Activated B cell treated with CpG ODN at 0.5 μM for 24 hours (primary cell): ENCODE measurements at regions of chr4 and their contacts with region 1.

Region 1: DNA sequence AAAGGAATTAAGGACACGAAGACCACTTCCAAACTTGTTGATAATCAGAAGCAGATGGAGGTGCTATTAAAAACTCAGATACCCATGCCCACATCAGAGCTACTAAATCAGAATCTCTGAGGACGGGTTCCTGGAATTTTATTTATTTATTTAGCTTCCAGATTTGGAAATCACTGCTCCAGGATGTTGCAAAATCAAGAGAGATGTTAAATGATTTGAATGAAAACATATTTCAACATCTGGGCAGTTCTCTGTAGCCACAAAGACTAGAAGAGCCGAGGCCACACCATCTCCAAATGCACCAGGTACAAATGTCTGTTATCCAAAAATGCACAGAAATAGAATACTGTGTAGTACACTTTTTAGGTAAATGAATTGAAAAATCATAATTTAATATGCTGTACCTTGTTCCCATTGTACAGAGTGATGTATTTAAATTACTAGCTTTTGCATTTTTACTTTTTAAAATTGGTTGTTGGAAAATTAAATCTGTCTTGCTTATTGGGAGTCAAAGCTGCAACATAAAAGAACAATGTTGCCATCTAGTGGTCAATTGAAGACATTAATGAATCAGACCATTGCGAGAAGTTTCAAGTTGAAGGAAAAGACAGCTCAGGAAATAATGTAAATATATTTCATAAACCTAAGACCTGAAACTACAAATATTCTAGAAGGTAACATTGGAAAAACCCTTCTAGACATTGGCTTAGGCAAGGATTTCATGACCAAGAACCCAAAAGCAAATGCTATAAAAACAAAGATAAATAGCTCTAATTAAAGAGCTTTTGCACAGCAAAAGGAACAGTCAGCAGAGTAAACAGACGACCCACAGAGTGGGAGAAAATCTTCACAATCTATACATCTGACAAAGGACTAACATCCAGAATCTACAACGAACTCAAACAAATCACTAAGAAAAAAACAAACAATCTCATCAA is 151.3 kb upstream of the TTC29 start:
- DNase-seq: no peak
- ATAC-seq: peak; percentile 37
- H3K4me3 Mint-ChIP-seq: no peak overlapping the region
- H3K27ac Mint-ChIP-seq: no peak overlapping the region
- H3K4me1 Mint-ChIP-seq: no peaks in the 10 kb centered on the region
- H3K27me3 Mint-ChIP-seq: peaks cover 18% of the 10 kb centered on the region
- CTCF ChIP-seq: peak; percentile 47

Region 2: GRCh38 chr4:145234091-145234706 is 1862.7 kb before region 1 on chr4:
- CTCF ChIA-PET with region 1: interaction called, 4 read pairs
- POLR2A ChIA-PET with region 1: no interaction called
- intact Hi-C with region 1: loop called (anchors 1 kb)
- DNase-seq: no peak
- ATAC-seq: peak; percentile 67
- H3K4me3 Mint-ChIP-seq: no peak overlapping the region
- H3K27ac Mint-ChIP-seq: no peak overlapping the region
- H3K4me1 Mint-ChIP-seq: no peaks in the 10 kb centered on the region
- H3K27me3 Mint-ChIP-seq: no peaks in the 10 kb centered on the region
- CTCF ChIP-seq: no peak

Region 3: DNA sequence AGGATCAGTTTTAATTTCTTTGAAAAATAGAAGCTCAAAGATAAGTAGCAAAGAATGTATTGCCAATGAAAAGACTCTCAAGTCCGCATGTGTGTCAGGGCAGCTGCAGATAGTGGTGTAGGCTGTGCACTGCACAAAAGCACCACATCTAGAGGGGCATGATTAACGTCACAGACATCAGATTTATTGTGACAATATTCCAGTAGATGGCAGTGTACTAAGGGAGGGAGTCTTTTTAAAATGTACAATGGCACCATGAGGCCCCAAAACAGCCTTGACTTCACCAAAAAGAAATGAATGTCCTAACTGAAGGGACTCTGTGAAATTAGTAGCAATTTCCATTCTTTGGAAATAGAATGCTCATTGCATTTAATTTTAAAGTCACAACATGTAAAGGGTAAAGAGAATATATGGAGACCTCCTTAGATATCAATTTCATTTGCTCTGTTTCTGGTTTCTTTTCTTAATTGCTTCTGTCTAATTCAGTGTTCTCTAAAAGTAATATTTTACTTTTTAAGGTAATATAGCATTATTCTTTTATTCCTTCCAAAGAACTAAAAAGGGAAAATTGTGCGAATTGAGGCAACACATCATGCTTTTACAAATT is 1256.7 kb before region 1 on chr4:
- CTCF ChIA-PET with region 1: no interaction called
- POLR2A ChIA-PET with region 1: no interaction called
- intact Hi-C with region 1: loop called (anchors 5 kb)
- DNase-seq: no peak
- ATAC-seq: peak; percentile 76
- H3K4me3 Mint-ChIP-seq: no peak overlapping the region
- H3K27ac Mint-ChIP-seq: no peak overlapping the region
- H3K4me1 Mint-ChIP-seq: peaks cover 11% of the 10 kb centered on the region
- H3K27me3 Mint-ChIP-seq: no peaks in the 10 kb centered on the region
- CTCF ChIP-seq: no peak

Region 4: GRCh38 chr4:145956288-145956890 is 1140.5 kb before region 1 on chr4:
- CTCF ChIA-PET with region 1: no interaction called
- POLR2A ChIA-PET with region 1: no interaction called
- intact Hi-C with region 1: loop called (anchors 1 kb)
- DNase-seq: no peak
- ATAC-seq: peak; percentile 77
- H3K4me3 Mint-ChIP-seq: no peak overlapping the region
- H3K27ac Mint-ChIP-seq: no peak overlapping the region
- H3K4me1 Mint-ChIP-seq: peaks cover 6% of the 10 kb centered on the region
- H3K27me3 Mint-ChIP-seq: no peaks in the 10 kb centered on the region
- CTCF ChIP-seq: peak; percentile 87

Region 5: GRCh38 chr4:146243141-146243882 is 853.6 kb before region 1 on chr4:
- CTCF ChIA-PET with region 1: interaction called, 4 read pairs
- POLR2A ChIA-PET with region 1: no interaction called
- intact Hi-C with region 1: loop called (anchors 1 kb)
- DNase-seq: peak; percentile 33
- ATAC-seq: peak; percentile 78
- H3K4me3 Mint-ChIP-seq: no peak overlapping the region
- H3K27ac Mint-ChIP-seq: no peak overlapping the region
- H3K4me1 Mint-ChIP-seq: peaks cover 12% of the 10 kb centered on the region
- H3K27me3 Mint-ChIP-seq: no peaks in the 10 kb centered on the region
- CTCF ChIP-seq: no peak

Region 6: DNA sequence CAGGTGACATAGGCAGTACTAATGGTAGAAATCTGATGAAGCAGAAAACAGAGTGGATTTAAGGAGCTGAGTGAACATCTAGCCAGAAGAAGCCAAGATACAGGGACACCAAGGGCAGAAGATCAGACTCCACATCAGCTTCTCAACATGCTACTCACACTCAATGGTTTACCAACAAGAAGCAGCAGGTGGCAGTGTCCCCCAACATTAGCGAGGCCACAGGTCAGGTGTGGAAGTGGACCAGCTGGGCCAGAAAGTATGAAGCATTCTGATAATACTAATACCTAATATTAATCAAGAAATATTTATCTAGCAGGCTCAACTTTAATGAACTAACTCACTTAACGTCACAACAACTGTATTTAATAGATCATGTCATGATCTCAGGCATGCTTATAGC is 77.9 kb before region 1 on chr4:
- CTCF ChIA-PET with region 1: interaction called, 107 read pairs
- POLR2A ChIA-PET with region 1: no interaction called
- intact Hi-C with region 1: loop called (anchors 1 kb)
- DNase-seq: peak; percentile 23
- ATAC-seq: no peak
- H3K4me3 Mint-ChIP-seq: no peak overlapping the region
- H3K27ac Mint-ChIP-seq: no peak overlapping the region
- H3K4me1 Mint-ChIP-seq: no peaks in the 10 kb centered on the region
- H3K27me3 Mint-ChIP-seq: peaks cover 2% of the 10 kb centered on the region
- CTCF ChIP-seq: no peak

Region 7: GRCh38 chr4:147658501-147658900 is 561.6 kb after region 1 on chr4:
- CTCF ChIA-PET with region 1: no interaction called
- POLR2A ChIA-PET with region 1: no interaction called
- intact Hi-C with region 1: no loop called
- DNase-seq: no peak
- ATAC-seq: no peak
- H3K4me3 Mint-ChIP-seq: no peak overlapping the region
- H3K27ac Mint-ChIP-seq: no peak overlapping the region
- H3K4me1 Mint-ChIP-seq: no peaks in the 10 kb centered on the region
- H3K27me3 Mint-ChIP-seq: no peaks in the 10 kb centered on the region
- CTCF ChIP-seq: no peak

Region 8: DNA sequence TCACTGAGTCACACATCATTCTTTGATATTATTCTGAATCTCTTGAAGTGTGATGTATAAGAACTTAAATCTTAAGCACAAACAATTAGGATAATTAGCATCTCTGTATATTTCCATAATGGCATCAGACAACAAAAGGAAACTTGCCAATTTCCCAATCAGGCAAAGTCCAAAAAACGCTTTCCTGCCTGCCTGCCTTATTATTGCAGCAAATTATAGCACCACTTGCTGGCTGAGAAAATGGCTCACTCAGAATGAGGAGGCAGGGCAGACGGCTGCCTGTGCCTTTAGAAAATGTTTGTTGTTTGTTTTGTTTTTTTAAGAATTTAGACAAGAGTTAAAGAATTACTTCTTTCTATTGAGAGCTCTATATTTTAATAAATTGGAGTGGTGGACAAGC is 1373.0 kb after region 1 on chr4:
- CTCF ChIA-PET with region 1: no interaction called
- POLR2A ChIA-PET with region 1: no interaction called
- intact Hi-C with region 1: no loop called
- DNase-seq: no peak
- ATAC-seq: no peak
- H3K4me3 Mint-ChIP-seq: no peak overlapping the region
- H3K27ac Mint-ChIP-seq: no peak overlapping the region
- H3K4me1 Mint-ChIP-seq: no peaks in the 10 kb centered on the region
- H3K27me3 Mint-ChIP-seq: peaks cover 2% of the 10 kb centered on the region
- CTCF ChIP-seq: no peak